ENCODE measurements at regions of chr19 and their contacts with region 1.

Region 1: DNA sequence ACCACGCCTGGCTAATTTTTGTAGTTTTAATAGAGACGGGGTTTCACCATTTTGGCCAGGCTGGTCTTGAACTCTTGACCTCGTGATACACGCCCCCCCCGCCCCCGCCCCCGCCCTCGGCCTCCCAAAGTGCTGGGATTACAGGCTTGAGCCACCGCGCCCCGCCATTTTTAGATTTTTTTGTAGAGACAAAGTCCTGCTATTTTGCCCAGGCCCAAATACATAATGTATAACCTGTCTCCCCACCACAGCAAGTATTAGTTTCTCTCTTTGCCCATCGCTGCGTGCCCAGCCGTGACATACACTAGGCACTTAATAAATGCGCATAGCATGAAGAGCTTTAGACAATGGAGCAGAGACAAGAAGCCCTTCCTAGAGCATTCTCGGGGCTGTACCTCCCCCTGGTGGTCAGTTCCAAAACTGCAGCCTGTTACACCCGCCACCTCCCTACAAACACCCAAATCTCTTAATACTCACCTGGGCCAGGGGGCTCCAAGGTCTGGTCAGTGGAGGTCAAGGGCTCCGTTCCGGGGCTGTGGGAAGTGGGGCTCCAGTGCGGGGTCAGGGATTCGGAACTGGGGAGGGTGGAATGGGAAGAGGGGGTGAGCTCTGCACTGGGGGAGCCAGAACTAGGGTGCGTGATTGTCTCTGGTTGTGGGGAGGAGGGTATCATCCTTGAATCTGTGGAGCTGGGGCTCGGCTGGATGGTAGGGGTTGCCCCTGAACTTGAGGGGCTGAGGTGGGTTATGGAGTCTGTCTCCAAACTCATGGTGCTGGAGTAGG is 22.5 kb downstream of the IQCN start:
- DNase-seq: peak; percentile 74
- ATAC-seq: peak; percentile 84
- H3K4me3 ChIP-seq: no peak overlapping the region
- H3K27ac ChIP-seq: no peak overlapping the region
- H3K4me1 ChIP-seq: peaks cover 0 to 28% of the 10 kb centered on the region in 2 experiments; a peak in 2 of 4 replicates
- H3K27me3 ChIP-seq: no peaks in the 10 kb centered on the region
- CTCF ChIP-seq: peak; percentile 91 to 99 (median 92)
- POLR2A ChIP-seq: no peak
- RAD21 ChIP-seq: peak; percentile 99

Region 2: GRCh38 chr19:17932485-17933338 is 319.1 kb before region 1 on chr19 and contains the start of gene CCDC124:
- CTCF ChIA-PET with region 1: no interaction called
- POLR2A ChIA-PET with region 1: no interaction called
- RAD21 ChIA-PET with region 1: no interaction called
- intact Hi-C with region 1: loop called (anchors 10 kb)
- DNase-seq: peak; percentile 88
- ATAC-seq: peak; percentile 87
- H3K4me3 ChIP-seq: peak within 1 kb of the TSS; percentile 87 to 98
- H3K27ac ChIP-seq: peak within 1 kb of the TSS; percentile 86
- H3K4me1 ChIP-seq: peaks cover 15 to 22% of the 10 kb centered on the region in 2 experiments
- H3K27me3 ChIP-seq: no peaks in the 10 kb centered on the region
- CTCF ChIP-seq: peak; percentile 94 to 97 (median 97)
- POLR2A ChIP-seq: peak; percentile 41
- RAD21 ChIP-seq: peak; percentile 100
- total RNA-seq, gene CCDC124: 177 TPM

Region 3: DNA sequence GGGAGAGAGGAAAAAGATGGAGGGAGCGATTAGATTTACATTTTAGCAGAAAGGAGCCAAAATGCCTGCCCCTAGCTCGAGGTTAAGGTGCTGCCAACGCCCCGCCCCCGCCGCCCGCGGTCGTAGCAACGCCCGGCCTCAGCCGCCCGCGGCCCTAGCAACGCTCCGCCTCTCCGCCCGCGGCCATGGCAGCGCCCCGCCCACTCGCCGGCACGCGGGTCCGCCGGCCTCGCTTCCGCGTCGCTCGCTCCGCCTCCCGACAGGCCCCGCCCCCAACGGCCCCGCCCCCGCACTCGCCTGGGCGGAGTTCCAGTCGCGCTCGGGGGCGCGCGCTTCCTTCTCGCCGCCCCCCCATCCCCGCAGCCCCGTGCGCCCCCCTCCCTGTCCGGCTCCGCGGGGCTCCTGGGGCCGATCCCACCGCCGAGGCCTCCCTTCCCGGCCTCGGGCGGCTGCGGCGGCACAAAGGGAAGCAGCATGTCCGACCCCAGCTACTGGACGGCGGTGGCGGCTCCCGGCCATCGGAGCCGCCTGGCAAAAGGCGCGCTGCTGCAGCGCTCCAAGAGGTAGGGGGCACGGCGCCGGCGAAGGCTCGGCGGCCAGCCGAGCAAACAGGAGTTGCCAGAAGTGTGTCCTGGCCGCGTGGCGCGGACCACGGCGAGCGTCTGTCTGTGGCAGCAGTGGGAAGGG is 133.9 kb before region 1 on chr19:
- CTCF ChIA-PET with region 1: interaction called, 14 read pairs
- POLR2A ChIA-PET with region 1: no interaction called
- RAD21 ChIA-PET with region 1: interaction called in 1 of 2 experiments, 7 read pairs
- intact Hi-C with region 1: loop called (anchors 2 kb)
- DNase-seq: peak; percentile 39
- ATAC-seq: peak; percentile 87
- H3K4me3 ChIP-seq: peak overlapping the region; percentile 65 to 84
- H3K27ac ChIP-seq: peak overlapping the region; percentile 57
- H3K4me1 ChIP-seq: peaks cover 8 to 21% of the 10 kb centered on the region in 2 experiments
- H3K27me3 ChIP-seq: no peaks in the 10 kb centered on the region
- CTCF ChIP-seq: no peak
- POLR2A ChIP-seq: no peak
- RAD21 ChIP-seq: no peak

Region 4: DNA sequence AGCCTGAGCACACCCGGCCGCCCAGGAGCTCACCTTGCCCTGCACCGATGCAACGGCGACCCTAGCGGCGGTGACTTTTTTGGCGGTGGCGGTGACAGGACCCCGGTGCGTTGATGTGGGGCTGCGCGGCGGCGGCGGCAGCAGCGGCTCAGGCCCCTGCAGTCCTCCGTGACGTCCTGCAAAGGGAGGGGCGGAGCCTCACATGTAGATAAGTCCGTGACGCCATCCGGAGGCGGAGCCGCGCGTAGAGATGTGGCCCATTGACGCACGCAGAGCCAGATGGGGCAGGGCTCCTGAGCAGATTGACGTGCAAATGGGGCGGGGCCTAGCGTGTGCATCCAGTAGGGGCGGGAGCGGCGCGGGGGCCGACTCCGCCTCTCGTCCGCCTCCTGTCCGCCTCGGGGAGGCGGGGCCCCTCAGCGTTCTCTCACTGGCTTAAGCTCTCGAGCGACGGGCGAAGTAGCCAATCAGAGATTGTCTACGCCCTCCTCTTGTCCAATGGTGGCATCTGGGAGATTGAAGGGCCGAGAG is 47.9 kb before region 1 on chr19 and contains the start of gene RAB3A:
- CTCF ChIA-PET with region 1: interaction called, 106 read pairs
- POLR2A ChIA-PET with region 1: interaction called, 7 read pairs
- RAD21 ChIA-PET with region 1: interaction called, 8 to 11 read pairs
- intact Hi-C with region 1: loop called (anchors 1 kb)
- DNase-seq: peak; percentile 100
- ATAC-seq: peak; percentile 90
- H3K4me3 ChIP-seq: peak within 1 kb of the TSS; percentile 87 to 92
- H3K27ac ChIP-seq: peak within 1 kb of the TSS; percentile 90
- H3K4me1 ChIP-seq: peaks cover 13 to 32% of the 10 kb centered on the region in 2 experiments
- H3K27me3 ChIP-seq: no peaks in the 10 kb centered on the region
- CTCF ChIP-seq: no peak
- POLR2A ChIP-seq: no peak
- RAD21 ChIP-seq: no peak
- total RNA-seq, gene RAB3A: 10.6 TPM

Region 5: DNA sequence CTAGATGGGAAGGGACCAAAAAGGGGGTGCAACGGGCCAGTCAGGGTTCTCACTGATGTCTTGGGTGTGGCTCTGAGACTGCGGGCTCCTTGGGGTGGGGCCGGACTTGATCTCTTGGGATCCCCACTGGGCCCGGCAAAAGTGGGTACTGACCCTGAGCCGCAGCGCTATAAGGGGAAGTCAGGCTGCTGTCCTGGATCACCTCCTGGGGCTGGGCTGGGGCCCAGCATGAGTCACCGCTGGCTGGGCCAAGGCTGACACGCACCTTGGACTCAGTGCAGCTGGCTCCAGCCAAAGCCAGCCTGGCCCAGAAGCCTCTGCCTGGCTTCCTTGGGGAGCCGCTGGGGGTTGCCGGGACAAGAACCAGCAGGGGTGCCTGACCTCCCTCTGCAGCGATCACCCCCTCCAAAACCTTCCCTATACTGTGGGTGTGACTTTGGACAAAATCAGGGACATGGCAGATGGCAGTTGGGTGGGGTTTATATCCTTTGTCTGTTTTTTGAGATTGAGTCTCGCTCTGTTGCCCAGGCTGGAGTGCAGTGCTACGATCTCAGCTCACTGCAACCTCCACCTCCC is 23.1 kb after region 1 on chr19:
- CTCF ChIA-PET with region 1: interaction called, 10 read pairs
- POLR2A ChIA-PET with region 1: interaction called, 4 read pairs
- RAD21 ChIA-PET with region 1: interaction called in 1 of 2 experiments, 10 read pairs
- intact Hi-C with region 1: no loop called
- DNase-seq: no peak
- ATAC-seq: peak; percentile 82
- H3K4me3 ChIP-seq: peak overlapping the region; percentile 1 to 47; a peak in 3 of 4 replicates
- H3K27ac ChIP-seq: peak overlapping the region; percentile 92
- H3K4me1 ChIP-seq: peaks cover 57 to 72% of the 10 kb centered on the region in 2 experiments
- H3K27me3 ChIP-seq: no peaks in the 10 kb centered on the region
- CTCF ChIP-seq: no peak
- POLR2A ChIP-seq: no peak
- RAD21 ChIP-seq: no peak